Calu3 (cell line): ENCODE measurements at regions of chr6 and their contacts with region 1.

Region 1: GRCh38 chr6:128179876-128180438 is 279.1 kb upstream of the THEMIS start:
- DNase-seq: no peak
- H3K4me3 Mint-ChIP-seq: no peak overlapping the region
- H3K27ac Mint-ChIP-seq: no peak overlapping the region
- H3K4me1 Mint-ChIP-seq: peaks cover 14% of the 10 kb centered on the region
- H3K27me3 Mint-ChIP-seq: no peaks in the 10 kb centered on the region
- CTCF ChIP-seq: no peak

Region 2: GRCh38 chr6:128192972-128193371 is 13.0 kb after region 1 on chr6:
- CTCF ChIA-PET with region 1: no interaction called
- intact Hi-C with region 1: loop called (anchors 2 kb)
- DNase-seq: no peak
- H3K4me3 Mint-ChIP-seq: no peak overlapping the region
- H3K27ac Mint-ChIP-seq: no peak overlapping the region
- H3K4me1 Mint-ChIP-seq: peaks cover 21% of the 10 kb centered on the region
- H3K27me3 Mint-ChIP-seq: no peaks in the 10 kb centered on the region
- CTCF ChIP-seq: no peak